A549 (cell line): ENCODE measurements at regions of chr17 and their contacts with region 1.

Region 1: DNA sequence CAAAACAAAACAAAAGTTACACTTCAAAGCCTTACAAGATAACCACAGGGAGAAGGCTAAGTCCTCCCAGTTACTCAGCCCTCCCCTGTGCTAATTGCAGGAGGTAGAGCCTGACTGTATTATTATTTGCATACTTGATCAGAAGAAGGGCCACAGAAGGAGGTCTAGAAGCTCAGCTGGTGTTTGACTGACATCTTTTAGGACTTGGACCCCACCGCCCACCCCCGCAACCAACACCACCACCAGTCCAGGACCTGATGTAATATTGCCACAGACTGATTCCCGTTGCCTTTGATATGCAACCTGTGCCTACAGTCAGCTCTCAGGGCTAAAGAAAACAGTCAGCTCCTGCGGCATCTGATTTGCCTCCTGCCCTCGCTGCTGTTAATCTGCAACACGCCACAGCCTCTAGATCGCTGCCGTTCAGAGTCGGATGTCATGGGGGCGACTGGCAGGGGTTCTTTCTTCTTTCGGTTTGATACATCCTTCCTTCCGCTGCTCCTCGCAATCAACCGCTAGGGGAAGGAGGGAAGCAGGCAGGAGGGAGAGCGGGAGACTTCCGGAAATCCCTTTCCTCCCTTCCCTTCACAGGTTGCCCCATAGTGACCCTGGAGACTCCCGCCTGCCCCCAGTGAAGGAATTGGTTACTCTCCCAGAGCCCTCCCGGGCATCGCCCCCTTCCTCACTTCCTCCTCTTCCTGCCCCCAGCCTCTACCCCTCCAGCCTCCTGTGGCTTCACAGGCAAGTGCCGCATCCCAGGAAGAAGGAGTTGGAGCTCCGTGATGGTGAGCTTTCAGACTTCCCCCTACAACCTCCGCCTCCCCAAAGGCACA is 90.5 kb upstream of the SOX9 start:
- DNase-seq: peak; percentile 82 to 88
- ATAC-seq: peak; percentile 98 to 99
- H3K4me3 ChIP-seq: peak overlapping the region; percentile 64
- H3K27ac ChIP-seq: peak overlapping the region; percentile 87 to 88
- H3K4me1 ChIP-seq: peaks cover 8% of the 10 kb centered on the region; the same call in 2 of the 3 replicates
- CTCF ChIP-seq: peak; percentile 45
- EP300 ChIP-seq: no peak
- POLR2A ChIP-seq: peak; percentile 15; the same call in 1 of the 2 replicates
- RAD21 ChIP-seq: peak; percentile 29 to 48

Region 2: GRCh38 chr17:71828182-71828596 is 202.1 kb before region 1 on chr17:
- CTCF ChIA-PET with region 1: no interaction called
- POLR2A ChIA-PET with region 1: no interaction called
- DNase-seq: no peak
- ATAC-seq: no peak
- H3K4me3 ChIP-seq: no peak overlapping the region
- H3K27ac ChIP-seq: no peak overlapping the region
- H3K4me1 ChIP-seq: no peaks in the 10 kb centered on the region
- CTCF ChIP-seq: no peak
- EP300 ChIP-seq: no peak
- POLR2A ChIP-seq: no peak
- RAD21 ChIP-seq: no peak

Region 3: GRCh38 chr17:72011561-72011960 is 18.7 kb before region 1 on chr17:
- CTCF ChIA-PET with region 1: interaction called, 10 read pairs
- POLR2A ChIA-PET with region 1: no interaction called
- DNase-seq: no peak
- ATAC-seq: no peak
- H3K4me3 ChIP-seq: no peak overlapping the region
- H3K27ac ChIP-seq: no peak overlapping the region
- H3K4me1 ChIP-seq: peaks cover 11% of the 10 kb centered on the region
- CTCF ChIP-seq: no peak
- EP300 ChIP-seq: no peak
- POLR2A ChIP-seq: no peak
- RAD21 ChIP-seq: no peak

Region 4: DNA sequence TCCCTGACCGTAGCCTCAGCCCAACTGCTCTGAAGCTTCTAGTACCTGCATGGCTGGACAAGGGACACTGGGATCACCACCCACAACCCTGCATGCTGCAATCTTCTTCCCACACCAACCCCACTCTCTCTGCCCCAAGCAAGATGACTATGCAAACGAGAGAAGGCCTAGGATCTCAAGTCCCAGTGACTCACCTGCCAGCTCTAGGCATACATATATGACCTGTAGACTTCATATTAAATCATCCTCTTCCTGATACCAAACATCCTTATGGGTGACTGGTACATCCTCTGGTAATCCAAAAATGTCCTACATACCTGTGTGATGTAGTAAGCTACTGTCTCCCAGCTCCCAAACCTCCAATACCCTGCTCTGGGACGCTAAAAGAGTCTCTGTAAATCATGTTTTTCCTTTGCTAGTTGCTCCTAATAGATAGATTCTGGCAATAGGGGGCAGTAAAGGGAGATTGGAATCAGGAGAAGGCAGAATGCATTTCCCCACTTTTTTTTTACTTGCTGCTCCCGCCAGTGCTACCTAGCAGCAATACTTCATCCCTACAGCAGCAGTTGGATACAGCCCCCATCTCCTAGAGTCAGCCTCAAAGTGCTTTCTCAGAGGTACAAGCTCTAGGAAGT is 47.2 kb after region 1 on chr17:
- CTCF ChIA-PET with region 1: no interaction called
- POLR2A ChIA-PET with region 1: no interaction called
- DNase-seq: no peak
- ATAC-seq: no peak
- H3K4me3 ChIP-seq: no peak overlapping the region
- H3K27ac ChIP-seq: no peak overlapping the region
- H3K4me1 ChIP-seq: no peaks in the 10 kb centered on the region
- CTCF ChIP-seq: no peak
- EP300 ChIP-seq: no peak
- POLR2A ChIP-seq: no peak
- RAD21 ChIP-seq: no peak

Region 5: GRCh38 chr17:72104164-72104862 is 74.0 kb after region 1 on chr17:
- CTCF ChIA-PET with region 1: no interaction called
- POLR2A ChIA-PET with region 1: no interaction called
- DNase-seq: no peak
- ATAC-seq: no peak
- H3K4me3 ChIP-seq: no peak overlapping the region
- H3K27ac ChIP-seq: no peak overlapping the region
- H3K4me1 ChIP-seq: no peaks in the 10 kb centered on the region
- CTCF ChIP-seq: no peak
- EP300 ChIP-seq: no peak
- POLR2A ChIP-seq: no peak
- RAD21 ChIP-seq: no peak